ENCODE measurements at regions of chr18 and their contacts with region 1.

Region 1: DNA sequence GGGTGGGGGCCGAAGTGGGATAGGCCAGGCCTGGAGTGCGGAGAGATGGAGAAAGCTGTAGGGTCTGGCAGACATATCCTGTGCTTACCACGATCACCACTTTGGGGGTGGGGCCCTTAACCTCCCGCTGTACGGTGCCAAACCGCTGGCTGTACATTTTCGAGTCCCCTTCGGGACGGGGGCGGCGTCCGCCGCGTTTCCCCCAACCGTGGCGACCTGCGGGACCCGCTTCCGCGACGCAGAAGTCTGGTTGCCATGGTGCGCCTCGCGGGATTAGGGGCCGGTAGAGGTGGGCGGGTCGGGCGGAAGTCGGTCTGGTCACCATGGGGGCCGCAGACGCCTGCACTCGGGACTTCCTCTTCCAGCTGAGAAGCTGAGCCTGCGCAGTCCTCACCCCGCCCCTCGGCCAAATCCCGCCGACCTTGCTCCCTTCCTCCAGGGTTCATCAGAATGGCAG is at the start of gene CFAP53:
- DNase-seq: peak; percentile 78 to 90 (median 84)
- H3K4me3 ChIP-seq: peak within 1 kb of the TSS; percentile 71
- H3K4me3 Mint-ChIP-seq: peak within 1 kb of the TSS; percentile 85 to 92 (median 89)
- H3K27ac ChIP-seq: peak within 1 kb of the TSS; percentile 57
- H3K27ac Mint-ChIP-seq: peak within 1 kb of the TSS; percentile 77 to 96 (median 94)
- H3K4me1 ChIP-seq: peaks cover 22% of the 10 kb centered on the region
- H3K4me1 Mint-ChIP-seq: peaks cover 12 to 29% (median 24%) of the 10 kb centered on the region in 3 donors
- H3K27me3 ChIP-seq: no peaks in the 10 kb centered on the region
- H3K27me3 Mint-ChIP-seq: peaks cover 0 to 1% of the 10 kb centered on the region in 2 donors
- total RNA-seq, gene CFAP53: 0.49 to 0.53 TPM

Region 2: DNA sequence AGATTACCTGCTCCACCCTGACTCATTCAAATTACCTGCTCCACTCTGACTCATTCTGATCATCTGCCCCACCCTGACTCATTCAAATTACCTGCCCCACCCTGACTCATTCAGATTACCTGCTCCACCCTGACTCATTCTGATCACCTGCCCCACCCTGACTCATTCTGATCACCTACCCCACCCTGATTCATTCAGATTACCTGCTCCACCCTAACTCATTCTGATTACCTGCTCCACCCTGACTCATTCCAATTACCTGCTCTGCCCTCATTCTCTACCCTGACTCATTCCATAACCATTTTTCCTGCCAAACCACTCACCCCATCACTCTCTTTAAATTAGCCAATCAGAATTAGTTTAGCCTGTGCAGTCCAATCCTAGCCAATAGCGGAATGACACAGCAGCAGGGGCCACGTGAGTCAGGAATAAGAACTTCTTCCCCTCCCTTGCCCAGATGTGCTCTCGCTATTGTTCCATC is 26.2 kb before region 1 on chr18:
- CTCF ChIA-PET with region 1: no interaction called
- POLR2A ChIA-PET with region 1: no interaction called
- DNase-seq: no peak
- H3K4me3 ChIP-seq: no peak overlapping the region
- H3K4me3 Mint-ChIP-seq: no peak overlapping the region
- H3K27ac ChIP-seq: no peak overlapping the region
- H3K27ac Mint-ChIP-seq: no peak overlapping the region
- H3K4me1 ChIP-seq: no peaks in the 10 kb centered on the region
- H3K4me1 Mint-ChIP-seq: no peaks in the 10 kb centered on the region
- H3K27me3 ChIP-seq: peaks cover 3% of the 10 kb centered on the region
- H3K27me3 Mint-ChIP-seq: peaks cover 19 to 50% of the 10 kb centered on the region in 2 donors

Region 3: DNA sequence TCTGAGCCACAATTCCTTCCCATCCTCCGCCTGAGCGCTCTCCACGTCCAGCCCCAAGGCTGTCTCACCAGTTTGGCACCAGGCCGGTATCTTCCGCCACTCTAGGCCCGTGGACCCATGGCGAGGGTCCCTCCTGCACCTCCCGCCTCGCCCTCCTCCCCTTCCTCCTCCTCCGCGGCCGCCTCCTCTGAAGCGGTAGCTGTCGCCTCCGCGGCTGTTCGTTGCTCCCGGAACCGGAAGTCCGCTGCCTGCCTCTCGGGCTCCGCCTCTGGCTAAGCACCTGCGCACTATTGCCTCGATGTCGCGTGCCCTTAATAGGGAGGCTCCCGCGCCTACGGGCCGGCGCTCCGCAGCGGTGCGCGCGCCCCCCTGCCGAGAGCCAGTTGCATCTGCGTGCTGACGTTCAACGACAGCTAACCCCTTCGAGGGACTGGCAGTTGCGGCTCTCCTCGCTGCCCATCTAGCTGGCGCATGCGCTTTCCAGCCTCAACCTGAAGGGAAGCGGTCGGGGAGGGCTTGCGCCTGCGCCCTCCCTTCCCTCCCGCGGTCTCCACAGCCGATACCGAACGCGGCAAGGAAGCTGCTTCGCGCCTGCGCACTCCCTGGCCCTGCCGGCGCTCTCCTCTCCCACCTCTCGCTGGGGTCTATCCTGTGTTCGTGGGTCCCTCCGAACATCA is 15.2 kb after region 1 on chr18 and contains the start of gene MBD1:
- CTCF ChIA-PET with region 1: interaction called, 19 read pairs
- POLR2A ChIA-PET with region 1: interaction called, 10 read pairs
- DNase-seq: peak; percentile 96 to 99 (median 97)
- H3K4me3 ChIP-seq: peak within 1 kb of the TSS; percentile 90
- H3K4me3 Mint-ChIP-seq: peak within 1 kb of the TSS; percentile 95 to 98 (median 97)
- H3K27ac ChIP-seq: peak within 1 kb of the TSS; percentile 86
- H3K27ac Mint-ChIP-seq: peak within 1 kb of the TSS; percentile 89 to 100 (median 98)
- H3K4me1 ChIP-seq: peaks cover 35% of the 10 kb centered on the region
- H3K4me1 Mint-ChIP-seq: peaks cover 36 to 55% (median 41%) of the 10 kb centered on the region in 3 donors
- H3K27me3 ChIP-seq: no peaks in the 10 kb centered on the region
- H3K27me3 Mint-ChIP-seq: peaks cover 0 to 1% of the 10 kb centered on the region in 2 donors
- total RNA-seq, gene MBD1: 83.0 to 99.2 TPM

Region 4: GRCh38 chr18:50397023-50397422 is 130.7 kb after region 1 on chr18:
- CTCF ChIA-PET with region 1: no interaction called
- POLR2A ChIA-PET with region 1: no interaction called
- DNase-seq: no peak
- H3K4me3 ChIP-seq: no peak overlapping the region
- H3K4me3 Mint-ChIP-seq: no peak overlapping the region
- H3K27ac ChIP-seq: no peak overlapping the region
- H3K27ac Mint-ChIP-seq: peak overlapping the region in 1 of 8 donors; percentile 23
- H3K4me1 ChIP-seq: no peaks in the 10 kb centered on the region
- H3K4me1 Mint-ChIP-seq: no peaks in the 10 kb centered on the region
- H3K27me3 ChIP-seq: no peaks in the 10 kb centered on the region
- H3K27me3 Mint-ChIP-seq: peaks cover 16 to 31% of the 10 kb centered on the region in 2 donors